GM10248 (cell line): ENCODE measurements at regions of chr5 and their contacts with region 1.

Region 1: GRCh38 chr5:172479044-172479783 is 24.9 kb upstream of the SH3PXD2B start:
- DNase-seq: peak; percentile 85
- CTCF ChIP-seq: peak; percentile 76

Region 2: DNA sequence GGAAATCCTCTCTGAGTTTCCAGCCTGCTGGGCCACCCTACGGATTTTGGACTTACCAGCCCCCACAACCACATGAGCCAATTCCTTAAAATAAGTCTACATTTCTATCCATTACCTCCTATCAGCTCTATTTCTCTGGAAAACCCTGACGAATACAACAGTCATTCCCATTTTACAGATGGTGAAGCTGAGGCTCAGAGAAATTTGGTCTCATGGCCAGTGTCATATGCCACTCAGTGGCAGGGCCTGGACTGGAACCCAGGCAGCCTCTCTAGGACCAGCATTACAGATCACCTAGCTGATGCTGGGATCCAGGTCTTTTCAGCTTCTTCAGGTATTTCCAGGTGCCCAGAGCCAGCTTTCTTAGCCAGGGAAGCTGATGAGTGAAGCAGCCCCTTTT is 20.1 kb after region 1 on chr5:
- CTCF ChIA-PET with region 1: no interaction called
- POLR2A ChIA-PET with region 1: no interaction called
- DNase-seq: peak; percentile 3
- CTCF ChIP-seq: no peak

Region 3: DNA sequence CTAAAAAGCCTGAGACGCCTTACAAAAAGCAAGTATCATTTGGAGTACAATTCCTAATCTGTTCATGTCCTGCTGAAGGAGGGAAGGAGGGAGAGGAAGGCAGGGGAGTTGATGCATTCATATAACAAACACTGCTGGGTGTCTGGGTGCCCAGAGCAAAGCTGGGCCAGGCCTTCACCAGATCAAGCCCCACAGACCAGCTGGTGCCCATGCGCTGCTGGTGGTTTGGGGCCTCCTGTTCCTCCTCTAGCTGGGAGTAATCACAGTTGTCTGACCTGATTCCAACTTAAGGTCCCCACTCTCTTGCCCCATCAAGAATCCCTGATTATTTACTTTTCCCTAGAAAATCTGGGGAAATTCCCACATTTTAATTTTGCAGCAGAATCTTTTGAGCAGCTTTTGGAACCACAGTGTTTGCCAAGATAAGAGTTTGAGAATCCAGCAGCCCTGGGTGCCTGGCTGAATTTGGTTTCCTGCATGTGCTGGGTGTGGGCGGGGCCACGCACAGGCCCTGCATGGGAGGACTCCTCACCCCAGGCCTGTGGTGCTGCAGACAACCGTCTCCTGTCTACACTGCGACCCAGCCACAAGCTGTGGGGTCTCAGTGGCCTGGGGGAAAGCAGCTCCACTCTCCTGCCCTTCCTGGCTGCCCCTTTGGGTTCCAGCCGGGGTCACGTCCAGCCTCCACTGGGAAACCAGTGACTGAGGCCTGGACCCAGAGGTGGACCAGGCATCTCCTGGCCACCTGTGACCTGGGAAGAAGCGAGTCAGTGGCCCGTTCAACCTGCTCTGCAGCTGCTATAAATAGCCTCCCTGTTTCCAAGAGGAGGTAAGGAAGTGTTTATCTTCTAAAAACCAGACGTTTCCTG is 209.4 kb after region 1 on chr5:
- CTCF ChIA-PET with region 1: interaction called, 12 read pairs
- POLR2A ChIA-PET with region 1: no interaction called
- DNase-seq: peak; percentile 69
- CTCF ChIP-seq: no peak